ENCODE measurements at regions of chr11 and their contacts with region 1.

Region 1: GRCh38 chr11:73779084-73779902 is 8.4 kb upstream of the MRPL48 start:
- DNase-seq: peak; percentile 97
- ATAC-seq: peak; percentile 100
- H3K4me3 ChIP-seq: peak overlapping the region; percentile 79
- H3K27ac ChIP-seq: peak overlapping the region; percentile 96
- H3K4me1 ChIP-seq: peaks cover 4% of the 10 kb centered on the region; the same call in 1 of the 2 replicates
- H3K27me3 ChIP-seq: no peaks in the 10 kb centered on the region
- CTCF ChIP-seq: no peak
- EP300 ChIP-seq: no peak
- POLR2A ChIP-seq: peak; percentile 85
- RAD21 ChIP-seq: no peak

Region 2: GRCh38 chr11:73633999-73634398 is 145.3 kb before region 1 on chr11:
- CTCF ChIA-PET with region 1: no interaction called
- POLR2A ChIA-PET with region 1: no interaction called
- RAD21 ChIA-PET with region 1: no interaction called
- SMC1A ChIA-PET with region 1: no interaction called
- in situ Hi-C with region 1: no loop called
- intact Hi-C with region 1: no loop called
- DNase-seq: no peak
- ATAC-seq: no peak
- H3K4me3 ChIP-seq: no peak overlapping the region
- H3K27ac ChIP-seq: no peak overlapping the region
- H3K4me1 ChIP-seq: no peaks in the 10 kb centered on the region
- H3K27me3 ChIP-seq: no peaks in the 10 kb centered on the region
- CTCF ChIP-seq: no peak
- EP300 ChIP-seq: no peak
- POLR2A ChIP-seq: no peak
- RAD21 ChIP-seq: no peak

Region 3: GRCh38 chr11:73693899-73694525 is 85.3 kb before region 1 on chr11:
- CTCF ChIA-PET with region 1: no interaction called
- POLR2A ChIA-PET with region 1: no interaction called
- RAD21 ChIA-PET with region 1: no interaction called
- SMC1A ChIA-PET with region 1: no interaction called
- in situ Hi-C with region 1: no loop called
- intact Hi-C with region 1: no loop called
- DNase-seq: no peak
- ATAC-seq: no peak
- H3K4me3 ChIP-seq: no peak overlapping the region
- H3K27ac ChIP-seq: no peak overlapping the region
- H3K4me1 ChIP-seq: no peaks in the 10 kb centered on the region
- H3K27me3 ChIP-seq: no peaks in the 10 kb centered on the region
- CTCF ChIP-seq: no peak
- EP300 ChIP-seq: no peak
- POLR2A ChIP-seq: no peak
- RAD21 ChIP-seq: no peak

Region 4: DNA sequence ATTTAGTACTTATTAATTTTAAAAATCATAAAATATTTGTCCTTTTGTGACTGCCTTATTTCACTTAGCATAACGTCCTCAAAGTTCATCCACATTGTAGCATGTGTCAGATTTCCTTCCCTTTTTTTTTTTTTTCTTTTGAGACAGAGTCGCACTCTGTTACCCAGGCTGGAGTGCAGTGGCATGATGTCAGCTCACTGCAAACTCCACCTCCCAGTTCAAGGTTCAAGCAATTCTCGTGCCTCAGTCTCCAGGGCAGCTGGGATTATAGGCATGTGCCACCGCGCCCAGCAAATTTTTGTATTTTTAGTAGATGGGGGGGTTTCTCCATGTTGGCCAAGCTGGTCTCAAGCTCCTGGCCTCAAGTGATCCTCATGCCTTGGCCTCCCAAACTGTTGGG is 29.1 kb before region 1 on chr11:
- CTCF ChIA-PET with region 1: no interaction called
- POLR2A ChIA-PET with region 1: no interaction called
- RAD21 ChIA-PET with region 1: no interaction called
- SMC1A ChIA-PET with region 1: no interaction called
- in situ Hi-C with region 1: no loop called
- intact Hi-C with region 1: no loop called
- DNase-seq: no peak
- ATAC-seq: no peak
- H3K4me3 ChIP-seq: no peak overlapping the region
- H3K27ac ChIP-seq: no peak overlapping the region
- H3K4me1 ChIP-seq: no peaks in the 10 kb centered on the region
- H3K27me3 ChIP-seq: no peaks in the 10 kb centered on the region
- CTCF ChIP-seq: no peak
- EP300 ChIP-seq: no peak
- POLR2A ChIP-seq: no peak
- RAD21 ChIP-seq: no peak

Region 5: DNA sequence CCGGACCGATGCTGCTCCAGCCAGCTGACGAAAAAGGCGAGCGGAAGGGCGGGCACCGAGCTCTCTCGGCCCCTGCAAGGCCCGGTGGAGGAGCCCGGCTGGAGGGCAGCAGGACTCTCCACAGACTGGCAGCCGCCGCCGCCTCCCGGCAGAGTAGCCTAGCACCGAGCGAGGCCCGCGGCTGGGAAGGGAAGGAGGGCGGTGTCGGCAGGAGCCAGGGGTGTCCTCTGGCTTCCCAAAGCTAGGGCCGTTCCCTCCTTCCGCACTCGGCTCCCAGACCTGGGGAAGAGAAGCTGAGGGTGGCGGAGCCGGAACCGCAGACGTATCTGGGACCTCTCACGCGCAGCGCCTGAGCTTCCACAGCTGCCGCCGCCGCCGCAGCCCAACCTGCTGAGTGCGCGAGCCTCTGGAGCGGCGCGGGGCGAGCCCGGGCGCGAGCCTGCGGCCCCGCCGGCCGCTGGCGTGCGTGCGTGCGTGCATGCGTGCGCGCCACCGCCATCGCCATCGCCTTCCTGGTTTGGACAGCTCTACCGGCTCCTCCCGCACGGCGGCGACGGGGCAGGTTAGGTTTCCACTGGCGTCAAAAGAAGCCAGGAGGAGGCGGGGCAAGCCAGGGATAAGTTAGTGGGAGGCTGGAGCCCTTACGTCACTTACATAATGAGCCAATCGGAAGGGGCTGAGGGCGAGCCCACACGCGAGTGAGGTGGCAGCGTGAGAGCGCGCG is 18.5 kb before region 1 on chr11 and contains the start of gene RAB6A:
- CTCF ChIA-PET with region 1: interaction called, 41 read pairs
- POLR2A ChIA-PET with region 1: interaction called, 106 read pairs
- RAD21 ChIA-PET with region 1: interaction called, 37 read pairs
- SMC1A ChIA-PET with region 1: interaction called, 53 read pairs
- in situ Hi-C with region 1: no loop called
- intact Hi-C with region 1: loop called (anchors 1 kb)
- DNase-seq: peak; percentile 98
- ATAC-seq: peak; percentile 94
- H3K4me3 ChIP-seq: peak within 1 kb of the TSS; percentile 98
- H3K27ac ChIP-seq: peak within 1 kb of the TSS; percentile 78
- H3K4me1 ChIP-seq: no peaks in the 10 kb centered on the region; the same call in 1 of the 2 replicates
- H3K27me3 ChIP-seq: no peaks in the 10 kb centered on the region
- CTCF ChIP-seq: peak; percentile 6 to 31 (median 28); a peak in 3 of 6 replicates
- EP300 ChIP-seq: no peak
- POLR2A ChIP-seq: peak; percentile 87
- RAD21 ChIP-seq: no peak
- polyA plus RNA-seq, gene RAB6A: 9.8 to 10.9 TPM

Region 6: DNA sequence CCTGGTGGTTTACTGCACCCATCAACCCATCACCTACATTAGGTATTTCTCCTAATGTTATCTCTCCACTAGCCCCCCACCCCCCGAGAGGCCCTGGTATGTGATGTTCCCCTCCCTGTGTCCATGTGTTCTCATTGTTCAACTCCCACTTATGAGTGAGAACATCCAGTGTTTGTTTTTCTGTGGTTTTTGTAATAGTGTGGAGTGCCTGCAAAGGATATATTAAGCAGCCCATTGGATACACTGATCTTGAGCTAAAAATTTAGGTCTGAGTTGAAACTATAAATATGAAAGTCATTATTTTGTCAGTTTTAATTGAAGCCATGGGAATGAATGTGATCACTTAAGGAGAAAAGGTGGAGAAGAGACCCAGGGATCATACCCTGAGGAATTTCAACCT is 31.3 kb after region 1 on chr11:
- CTCF ChIA-PET with region 1: no interaction called
- POLR2A ChIA-PET with region 1: no interaction called
- RAD21 ChIA-PET with region 1: no interaction called
- SMC1A ChIA-PET with region 1: no interaction called
- in situ Hi-C with region 1: no loop called
- intact Hi-C with region 1: no loop called
- DNase-seq: no peak
- ATAC-seq: no peak
- H3K4me3 ChIP-seq: no peak overlapping the region
- H3K27ac ChIP-seq: no peak overlapping the region
- H3K4me1 ChIP-seq: no peaks in the 10 kb centered on the region
- H3K27me3 ChIP-seq: no peaks in the 10 kb centered on the region
- CTCF ChIP-seq: no peak
- EP300 ChIP-seq: no peak
- POLR2A ChIP-seq: no peak
- RAD21 ChIP-seq: no peak